ENCODE measurements at regions of chr19 and their contacts with region 1.

Region 1: GRCh38 chr19:1241417-1242095 is at the start of gene ATP5F1D:
- DNase-seq: peak; percentile 78 to 97 (median 92)
- ATAC-seq: peak; percentile 60
- H3K4me3 ChIP-seq: peak within 1 kb of the TSS; percentile 48 to 71
- H3K4me3 Mint-ChIP-seq: peak within 1 kb of the TSS; percentile 88
- H3K27ac ChIP-seq: peak within 1 kb of the TSS; percentile 12 to 25
- H3K27ac Mint-ChIP-seq: peak within 1 kb of the TSS; percentile 90
- H3K4me1 ChIP-seq: peaks cover 58% of the 10 kb centered on the region
- H3K4me1 Mint-ChIP-seq: peaks cover 42% of the 10 kb centered on the region
- H3K27me3 ChIP-seq: peaks cover 0 to 11% of the 10 kb centered on the region in 2 experiments
- H3K27me3 Mint-ChIP-seq: peaks cover 6% of the 10 kb centered on the region
- CTCF ChIP-seq: no peak
- total RNA-seq, gene ATP5F1D: 86.2 to 96.3 TPM

Region 2: GRCh38 chr19:860481-861101 is 381.0 kb before region 1 on chr19:
- CTCF ChIA-PET with region 1: no interaction called
- POLR2A ChIA-PET with region 1: no interaction called
- intact Hi-C with region 1: loop called (anchors 1 to 10 kb)
- DNase-seq: peak; percentile 38 to 86 (median 63)
- ATAC-seq: peak; percentile 45
- H3K4me3 ChIP-seq: peak overlapping the region; percentile 22 to 46
- H3K4me3 Mint-ChIP-seq: peak overlapping the region; percentile 60
- H3K27ac ChIP-seq: no peak overlapping the region
- H3K27ac Mint-ChIP-seq: no peak overlapping the region
- H3K4me1 ChIP-seq: peaks cover 20% of the 10 kb centered on the region
- H3K4me1 Mint-ChIP-seq: peaks cover 17% of the 10 kb centered on the region
- H3K27me3 ChIP-seq: peaks cover 6 to 9% of the 10 kb centered on the region in 2 experiments
- H3K27me3 Mint-ChIP-seq: peaks cover 9% of the 10 kb centered on the region
- CTCF ChIP-seq: no peak

Region 3: DNA sequence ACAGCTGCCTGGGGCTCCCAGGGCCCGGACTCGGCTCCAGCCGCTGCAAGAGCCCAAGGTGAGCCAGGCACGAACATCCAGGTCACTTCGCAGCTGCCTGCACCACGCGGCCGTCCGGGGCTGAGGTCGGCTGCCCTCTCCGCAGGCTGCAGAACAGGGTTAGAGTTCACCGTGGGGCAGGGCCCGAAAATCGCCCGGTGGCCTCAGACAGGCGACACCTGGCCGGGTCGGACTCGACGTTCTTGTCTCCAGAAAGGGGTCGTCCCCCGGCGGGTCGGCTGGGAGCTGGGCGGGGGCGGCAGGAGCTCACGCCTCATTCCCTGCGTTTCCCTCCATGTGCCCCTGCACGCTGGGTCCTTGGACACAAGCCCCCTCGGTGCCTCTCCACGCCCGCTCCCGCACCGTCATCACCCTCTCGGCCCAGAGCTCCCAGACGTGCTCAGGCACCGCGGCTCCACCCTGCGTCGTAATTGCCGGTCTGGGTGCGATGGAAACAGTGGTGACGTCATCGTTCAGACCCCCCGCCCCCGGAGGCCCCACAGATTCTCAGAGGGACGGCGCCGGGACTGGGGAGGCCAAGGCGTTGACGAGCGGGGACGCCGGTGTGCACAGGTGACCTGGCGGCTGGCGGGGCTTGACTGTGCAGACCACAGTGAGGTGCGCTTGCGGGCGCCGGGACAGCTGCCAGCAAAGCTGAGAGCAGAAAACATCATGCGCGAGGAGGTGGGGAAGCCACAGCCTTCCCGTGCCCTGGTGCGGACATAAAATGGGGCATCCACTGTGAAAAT is 245.3 kb before region 1 on chr19:
- CTCF ChIA-PET with region 1: no interaction called
- POLR2A ChIA-PET with region 1: no interaction called
- intact Hi-C with region 1: loop called in 1 of 2 experiments (anchors 1 kb)
- DNase-seq: peak; percentile 44 to 97 (median 84)
- ATAC-seq: peak; percentile 79
- H3K4me3 ChIP-seq: peak overlapping the region; percentile 29 to 36
- H3K4me3 Mint-ChIP-seq: peak overlapping the region; percentile 72
- H3K27ac ChIP-seq: peak overlapping the region; percentile 16 to 27
- H3K27ac Mint-ChIP-seq: peak overlapping the region; percentile 92
- H3K4me1 ChIP-seq: peaks cover 27% of the 10 kb centered on the region
- H3K4me1 Mint-ChIP-seq: peaks cover 13% of the 10 kb centered on the region
- H3K27me3 ChIP-seq: peaks cover 15 to 22% of the 10 kb centered on the region in 2 experiments
- H3K27me3 Mint-ChIP-seq: peaks cover 15% of the 10 kb centered on the region
- CTCF ChIP-seq: no peak

Region 4: GRCh38 chr19:1113033-1113985 is 128.2 kb before region 1 on chr19:
- CTCF ChIA-PET with region 1: interaction called, 6 read pairs
- POLR2A ChIA-PET with region 1: interaction called, 3 read pairs
- intact Hi-C with region 1: loop called (anchors 1 kb)
- DNase-seq: peak; percentile 67 to 92 (median 89)
- ATAC-seq: peak; percentile 97
- H3K4me3 ChIP-seq: no peak overlapping the region
- H3K4me3 Mint-ChIP-seq: no peak overlapping the region
- H3K27ac ChIP-seq: peak overlapping the region in 1 of 2 experiments; percentile 56
- H3K27ac Mint-ChIP-seq: no peak overlapping the region
- H3K4me1 ChIP-seq: peaks cover 14% of the 10 kb centered on the region
- H3K4me1 Mint-ChIP-seq: peaks cover 4% of the 10 kb centered on the region
- H3K27me3 ChIP-seq: no peaks in the 10 kb centered on the region
- H3K27me3 Mint-ChIP-seq: no peaks in the 10 kb centered on the region
- CTCF ChIP-seq: peak; percentile 85

Region 5: DNA sequence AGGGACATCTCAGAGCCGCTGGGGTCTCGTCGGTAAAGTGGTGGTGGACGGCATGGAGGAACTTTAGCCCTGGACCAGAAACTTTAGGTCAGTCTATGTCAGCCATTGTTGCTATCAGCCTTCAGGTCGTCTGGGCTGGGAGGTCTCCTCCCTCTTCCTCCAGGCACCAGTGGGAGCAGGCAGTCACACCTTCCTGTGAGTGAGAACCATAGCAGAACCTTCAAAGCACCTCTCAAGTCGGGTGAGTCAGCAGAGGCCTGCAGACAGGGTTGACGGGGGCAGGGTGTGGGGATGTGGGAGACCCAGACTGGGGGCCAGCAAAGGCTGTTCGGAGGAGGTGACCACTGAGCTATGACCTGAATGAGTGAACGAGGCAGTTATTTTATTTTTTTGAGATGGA is 52.1 kb before region 1 on chr19:
- CTCF ChIA-PET with region 1: interaction called, 3 read pairs
- POLR2A ChIA-PET with region 1: no interaction called
- intact Hi-C with region 1: loop called (anchors 5 kb)
- DNase-seq: peak in 8 of 9 experiments; percentile 31 to 75 (median 59)
- ATAC-seq: peak; percentile 65
- H3K4me3 ChIP-seq: no peak overlapping the region
- H3K4me3 Mint-ChIP-seq: no peak overlapping the region
- H3K27ac ChIP-seq: peak overlapping the region in 1 of 2 experiments; percentile 28
- H3K27ac Mint-ChIP-seq: peak overlapping the region; percentile 32
- H3K4me1 ChIP-seq: peaks cover 22% of the 10 kb centered on the region
- H3K4me1 Mint-ChIP-seq: peaks cover 20% of the 10 kb centered on the region
- H3K27me3 ChIP-seq: no peaks in the 10 kb centered on the region
- H3K27me3 Mint-ChIP-seq: no peaks in the 10 kb centered on the region
- CTCF ChIP-seq: no peak

Region 6: GRCh38 chr19:1269065-1269477 is 27.5 kb after region 1 on chr19 and contains the start of gene CIRBP:
- CTCF ChIA-PET with region 1: interaction called, 498 read pairs
- POLR2A ChIA-PET with region 1: interaction called, 271 read pairs
- intact Hi-C with region 1: loop called (anchors 1 kb)
- DNase-seq: peak; percentile 99 to 100 (median 99)
- ATAC-seq: peak; percentile 80
- H3K4me3 ChIP-seq: peak within 1 kb of the TSS; percentile 65 to 84
- H3K4me3 Mint-ChIP-seq: peak within 1 kb of the TSS; percentile 85
- H3K27ac ChIP-seq: peak within 1 kb of the TSS; percentile 88 to 89
- H3K27ac Mint-ChIP-seq: peak within 1 kb of the TSS; percentile 95
- H3K4me1 ChIP-seq: peaks cover 73% of the 10 kb centered on the region
- H3K4me1 Mint-ChIP-seq: peaks cover 68% of the 10 kb centered on the region
- H3K27me3 ChIP-seq: no peaks in the 10 kb centered on the region
- H3K27me3 Mint-ChIP-seq: no peaks in the 10 kb centered on the region
- CTCF ChIP-seq: no peak
- total RNA-seq, gene CIRBP: 689 to 695 TPM

Region 7: DNA sequence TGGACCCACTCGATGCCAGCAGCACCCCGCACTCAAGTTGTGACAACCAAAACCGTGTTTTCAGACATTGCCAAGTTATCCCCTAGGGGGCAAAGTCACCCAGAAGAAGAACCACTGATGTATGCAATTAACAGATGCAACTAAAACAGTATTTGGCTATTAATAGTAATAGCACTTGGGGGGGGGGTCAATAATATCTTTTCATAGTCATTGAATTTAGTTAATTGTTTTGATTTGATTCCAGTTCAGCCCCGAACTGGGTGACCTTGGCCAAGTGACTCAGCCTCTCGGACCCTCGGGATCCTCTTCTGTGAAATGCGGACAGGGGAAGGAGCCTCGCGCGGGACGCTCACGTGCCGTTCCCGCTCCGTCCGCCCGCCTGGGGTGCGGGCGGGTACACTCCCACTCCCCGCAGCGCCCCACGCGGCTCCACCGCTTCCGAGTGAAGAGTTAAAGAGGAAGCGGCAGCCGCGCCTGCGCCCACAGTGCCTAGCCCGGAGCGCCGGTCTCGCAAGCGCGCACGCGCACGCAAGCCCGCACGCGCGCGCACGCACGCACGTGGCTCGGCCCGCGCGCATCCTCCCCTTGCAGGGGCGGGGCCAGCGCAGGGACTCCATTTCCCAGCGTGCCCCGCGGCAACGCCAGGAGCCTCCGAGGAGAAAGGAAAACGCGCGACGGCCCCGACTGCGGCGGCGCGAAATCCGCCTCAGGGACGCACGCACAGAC is 165.4 kb after region 1 on chr19:
- CTCF ChIA-PET with region 1: interaction called, 3 read pairs
- POLR2A ChIA-PET with region 1: no interaction called
- intact Hi-C with region 1: loop called in 1 of 2 experiments (anchors 2 kb)
- DNase-seq: peak; percentile 99 to 100 (median 99)
- ATAC-seq: peak; percentile 80
- H3K4me3 ChIP-seq: peak overlapping the region; percentile 52 to 59
- H3K4me3 Mint-ChIP-seq: peak overlapping the region; percentile 79
- H3K27ac ChIP-seq: peak overlapping the region; percentile 56 to 80
- H3K27ac Mint-ChIP-seq: peak overlapping the region; percentile 89
- H3K4me1 ChIP-seq: peaks cover 48% of the 10 kb centered on the region
- H3K4me1 Mint-ChIP-seq: peaks cover 41% of the 10 kb centered on the region
- H3K27me3 ChIP-seq: no peaks in the 10 kb centered on the region
- H3K27me3 Mint-ChIP-seq: no peaks in the 10 kb centered on the region
- CTCF ChIP-seq: peak; percentile 70